Mammary epithelial cell (primary cell): ENCODE measurements at regions of chr3 and their contacts with region 1.

Region 1: DNA sequence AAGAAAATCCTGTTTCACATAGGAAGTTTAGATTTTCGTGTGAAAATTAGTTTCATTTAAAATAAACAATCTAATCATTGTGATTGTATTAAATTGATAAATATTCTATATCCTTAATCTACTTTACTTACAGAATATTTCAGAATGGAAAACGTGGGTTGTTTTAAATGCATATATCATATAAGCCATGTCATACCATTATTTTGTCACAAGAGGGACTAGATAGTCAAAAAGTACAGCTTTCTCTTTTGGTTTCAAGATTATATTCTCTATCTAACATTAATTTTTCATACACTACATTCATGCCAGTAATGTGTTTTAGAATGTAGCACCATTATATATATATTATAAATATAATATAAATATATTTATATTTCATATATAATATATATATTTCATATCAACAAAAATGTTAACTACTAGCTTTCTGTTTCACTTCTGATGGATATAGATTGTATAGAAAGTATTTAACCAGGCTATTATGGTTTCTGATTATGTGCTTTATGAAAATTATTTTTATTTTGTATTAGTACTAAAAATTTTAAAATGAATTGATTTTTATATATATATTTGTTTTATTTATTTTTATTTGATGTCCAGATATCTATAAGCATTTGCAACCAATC is 45.3 kb downstream of the OSTN start:
- DNase-seq: no peak
- H3K4me3 ChIP-seq: no peak overlapping the region
- H3K27ac ChIP-seq: no peak overlapping the region
- H3K4me1 ChIP-seq: peaks cover 5% of the 10 kb centered on the region
- H3K27me3 ChIP-seq: no peaks in the 10 kb centered on the region
- CTCF ChIP-seq: peak; percentile 36 to 53

Region 2: GRCh38 chr3:191275751-191276150 is 31.4 kb after region 1 on chr3:
- CTCF ChIA-PET with region 1: no interaction called
- dilution Hi-C with region 1: no loop called
- in situ Hi-C with region 1: no loop called
- intact Hi-C with region 1: no loop called
- DNase-seq: no peak
- H3K4me3 ChIP-seq: no peak overlapping the region
- H3K27ac ChIP-seq: no peak overlapping the region
- H3K4me1 ChIP-seq: no peaks in the 10 kb centered on the region
- H3K27me3 ChIP-seq: no peaks in the 10 kb centered on the region
- CTCF ChIP-seq: no peak

Region 3: GRCh38 chr3:191328962-191329653 is 84.8 kb after region 1 on chr3 and contains the start of gene CCDC50:
- CTCF ChIA-PET with region 1: no interaction called
- dilution Hi-C with region 1: no loop called
- in situ Hi-C with region 1: no loop called
- intact Hi-C with region 1: loop called (anchors 2 kb)
- DNase-seq: peak; percentile 73
- H3K4me3 ChIP-seq: peak within 1 kb of the TSS; percentile 65 to 83 (median 82)
- H3K27ac ChIP-seq: peak within 1 kb of the TSS; percentile 84
- H3K4me1 ChIP-seq: peaks cover 13% of the 10 kb centered on the region
- H3K27me3 ChIP-seq: no peaks in the 10 kb centered on the region
- CTCF ChIP-seq: peak in 1 of 2 donors; percentile 14
- total RNA-seq, gene CCDC50: 74.8 to 85.0 TPM

Region 4: GRCh38 chr3:191376516-191377141 is 132.3 kb after region 1 on chr3:
- CTCF ChIA-PET with region 1: no interaction called
- dilution Hi-C with region 1: no loop called
- in situ Hi-C with region 1: loop called (anchors 10 to 25 kb)
- intact Hi-C with region 1: no loop called
- DNase-seq: peak; percentile 75
- H3K4me3 ChIP-seq: no peak overlapping the region
- H3K27ac ChIP-seq: peak overlapping the region; percentile 59
- H3K4me1 ChIP-seq: peaks cover 33% of the 10 kb centered on the region
- H3K27me3 ChIP-seq: no peaks in the 10 kb centered on the region
- CTCF ChIP-seq: no peak

Region 5: DNA sequence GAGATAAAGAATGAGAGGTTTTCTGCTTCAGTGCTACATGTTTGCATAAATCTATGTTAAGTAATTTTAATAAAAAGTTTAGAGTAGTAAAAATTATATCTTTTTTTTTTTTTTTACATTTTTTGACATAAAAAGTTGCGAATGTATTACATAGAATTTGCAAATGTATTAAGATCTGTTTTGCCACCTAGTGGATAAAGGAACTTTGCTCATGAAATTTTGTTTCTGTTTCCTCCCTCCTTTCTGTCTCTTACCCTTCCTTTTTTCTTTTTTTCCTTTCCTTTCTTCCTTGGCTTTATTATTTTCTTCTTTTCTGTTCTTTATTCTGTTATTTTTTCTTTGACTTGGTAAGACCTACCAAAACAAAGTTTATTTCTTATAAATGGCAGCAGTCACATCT is 144.5 kb after region 1 on chr3:
- CTCF ChIA-PET with region 1: no interaction called
- dilution Hi-C with region 1: no loop called
- in situ Hi-C with region 1: loop called (anchors 10 to 25 kb)
- intact Hi-C with region 1: loop called (anchors 5 kb)
- DNase-seq: no peak
- H3K4me3 ChIP-seq: no peak overlapping the region
- H3K27ac ChIP-seq: no peak overlapping the region
- H3K4me1 ChIP-seq: no peaks in the 10 kb centered on the region
- H3K27me3 ChIP-seq: no peaks in the 10 kb centered on the region
- CTCF ChIP-seq: peak in 1 of 2 donors; percentile 37

Region 6: GRCh38 chr3:191499307-191500080 is 255.1 kb after region 1 on chr3:
- CTCF ChIA-PET with region 1: interaction called, 13 read pairs
- dilution Hi-C with region 1: no loop called
- in situ Hi-C with region 1: no loop called
- intact Hi-C with region 1: no loop called
- DNase-seq: peak; percentile 65
- H3K4me3 ChIP-seq: peak overlapping the region; percentile 13 to 49 (median 31)
- H3K27ac ChIP-seq: no peak overlapping the region
- H3K4me1 ChIP-seq: peaks cover 14% of the 10 kb centered on the region
- H3K27me3 ChIP-seq: no peaks in the 10 kb centered on the region
- CTCF ChIP-seq: no peak

Region 7: DNA sequence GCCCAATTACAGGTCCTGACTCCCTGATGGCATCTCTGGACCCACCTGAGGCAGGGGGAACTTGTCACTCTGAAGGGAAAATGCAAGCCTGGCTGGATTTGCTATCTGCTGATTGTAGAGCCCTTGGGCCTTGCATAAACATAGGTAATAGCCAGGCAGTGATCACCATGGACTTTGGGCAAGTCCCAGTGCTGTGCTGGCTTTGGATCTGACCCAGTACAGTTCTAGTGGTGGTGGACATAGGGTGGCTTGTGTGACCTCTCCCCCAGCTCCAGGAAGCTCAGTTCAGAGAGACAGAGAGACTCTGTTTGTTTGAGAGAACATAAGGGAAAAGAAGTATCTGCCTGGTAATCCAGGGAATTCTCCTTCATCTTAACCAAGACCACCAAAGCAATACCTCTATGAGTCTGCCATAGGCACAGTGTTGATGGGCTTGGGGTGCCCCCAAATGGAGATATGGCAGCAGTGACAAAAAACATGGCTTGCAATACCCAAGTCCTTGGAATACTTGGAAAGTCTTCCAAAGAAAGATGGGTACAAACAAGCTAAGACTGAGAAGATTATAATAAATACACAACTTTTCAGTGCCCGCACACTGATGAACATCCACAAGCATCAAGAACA is 565.1 kb after region 1 on chr3:
- CTCF ChIA-PET with region 1: no interaction called
- dilution Hi-C with region 1: no loop called
- in situ Hi-C with region 1: no loop called
- intact Hi-C with region 1: loop called (anchors 5 kb)
- DNase-seq: no peak
- H3K4me3 ChIP-seq: no peak overlapping the region
- H3K27ac ChIP-seq: no peak overlapping the region
- H3K4me1 ChIP-seq: no peaks in the 10 kb centered on the region
- H3K27me3 ChIP-seq: no peaks in the 10 kb centered on the region
- CTCF ChIP-seq: peak; percentile 15 to 26